ENCODE measurements at regions of chr3 and their contacts with region 1.

Region 1: GRCh38 chr3:5041315-5041714 is 62.1 kb downstream of the BHLHE40 start:
- DNase-seq: no peak
- H3K4me3 ChIP-seq: no peak overlapping the region
- H3K27ac ChIP-seq: no peak overlapping the region
- H3K4me1 ChIP-seq: no peaks in the 10 kb centered on the region
- H3K27me3 ChIP-seq: no peaks in the 10 kb centered on the region
- CTCF ChIP-seq: peak; percentile 8 to 27 (median 26); a peak in 3 of 4 replicates
- EP300 ChIP-seq: no peak
- POLR2A ChIP-seq: no peak
- RAD21 ChIP-seq: peak in 1 of 2 experiments; percentile 26; a peak in 1 of 4 replicates

Region 2: DNA sequence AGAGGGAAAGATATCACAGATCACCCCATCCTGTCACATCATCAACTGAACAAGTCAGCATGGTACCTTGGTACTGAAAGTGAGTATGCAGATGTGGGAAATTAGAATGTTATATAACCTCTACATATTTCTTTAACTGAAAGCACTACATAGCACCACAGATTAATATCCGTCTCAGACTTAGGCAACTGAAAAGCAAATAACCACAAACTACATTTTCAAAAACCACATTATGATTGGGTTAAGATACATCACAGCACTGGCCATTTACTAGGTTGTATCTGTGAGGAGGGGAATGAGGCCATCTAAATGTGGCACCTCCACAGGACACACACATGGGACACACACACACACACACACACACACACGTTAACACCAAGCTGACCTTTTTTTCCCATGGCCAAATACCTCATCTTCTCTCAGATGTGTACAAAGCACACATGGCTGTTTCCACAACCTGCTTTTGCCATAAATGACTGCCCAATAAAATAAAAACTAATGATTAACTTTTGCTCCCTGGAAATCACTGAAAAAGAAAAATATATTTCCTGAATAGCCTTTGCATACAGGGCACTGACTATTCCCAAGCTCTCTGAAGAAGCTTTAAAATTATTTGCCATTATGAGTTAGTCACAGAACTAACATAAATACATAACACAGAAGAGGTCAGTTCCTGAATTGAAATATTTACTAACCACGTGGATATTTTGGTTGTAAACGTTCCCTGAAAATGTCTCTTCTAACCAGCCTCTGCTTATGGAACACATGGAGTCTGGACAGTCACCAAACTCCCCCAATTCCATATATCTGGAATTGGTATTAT is 634.4 kb before region 1 on chr3:
- CTCF ChIA-PET with region 1: no interaction called
- POLR2A ChIA-PET with region 1: no interaction called
- DNase-seq: no peak
- H3K4me3 ChIP-seq: no peak overlapping the region
- H3K27ac ChIP-seq: no peak overlapping the region
- H3K4me1 ChIP-seq: no peaks in the 10 kb centered on the region
- H3K27me3 ChIP-seq: no peaks in the 10 kb centered on the region
- CTCF ChIP-seq: no peak
- EP300 ChIP-seq: no peak
- POLR2A ChIP-seq: no peak
- RAD21 ChIP-seq: no peak

Region 3: GRCh38 chr3:4999531-5000184 is 41.7 kb before region 1 on chr3:
- CTCF ChIA-PET with region 1: no interaction called
- POLR2A ChIA-PET with region 1: no interaction called
- DNase-seq: no peak
- H3K4me3 ChIP-seq: no peak overlapping the region
- H3K27ac ChIP-seq: no peak overlapping the region
- H3K4me1 ChIP-seq: peaks cover 0 to 3% (median 1%) of the 10 kb centered on the region in 4 experiments; a peak in 5 of 7 replicates
- H3K27me3 ChIP-seq: no peaks in the 10 kb centered on the region; a peak in 1 of 7 replicates
- CTCF ChIP-seq: no peak
- EP300 ChIP-seq: no peak
- POLR2A ChIP-seq: no peak
- RAD21 ChIP-seq: no peak

Region 4: GRCh38 chr3:5051772-5052171 is 10.5 kb after region 1 on chr3:
- CTCF ChIA-PET with region 1: interaction called, 20 read pairs
- POLR2A ChIA-PET with region 1: no interaction called
- DNase-seq: no peak
- H3K4me3 ChIP-seq: no peak overlapping the region
- H3K27ac ChIP-seq: no peak overlapping the region
- H3K4me1 ChIP-seq: no peaks in the 10 kb centered on the region
- H3K27me3 ChIP-seq: no peaks in the 10 kb centered on the region; a peak in 1 of 7 replicates
- CTCF ChIP-seq: no peak
- EP300 ChIP-seq: no peak
- POLR2A ChIP-seq: no peak
- RAD21 ChIP-seq: no peak

Measured in H1 (cell line).